ENCODE measurements at regions of chrX and their contacts with region 1.

Region 1: GRCh38 chrX:134764212-134764785 is 106.0 kb upstream of the PLAC1 start:
- DNase-seq: peak; percentile 35
- CTCF ChIP-seq: no peak

Region 2: GRCh38 chrX:134396174-134396573 is 368.1 kb before region 1 on chrX:
- in situ Hi-C with region 1: no loop called
- DNase-seq: no peak
- CTCF ChIP-seq: peak; percentile 60

Region 3: DNA sequence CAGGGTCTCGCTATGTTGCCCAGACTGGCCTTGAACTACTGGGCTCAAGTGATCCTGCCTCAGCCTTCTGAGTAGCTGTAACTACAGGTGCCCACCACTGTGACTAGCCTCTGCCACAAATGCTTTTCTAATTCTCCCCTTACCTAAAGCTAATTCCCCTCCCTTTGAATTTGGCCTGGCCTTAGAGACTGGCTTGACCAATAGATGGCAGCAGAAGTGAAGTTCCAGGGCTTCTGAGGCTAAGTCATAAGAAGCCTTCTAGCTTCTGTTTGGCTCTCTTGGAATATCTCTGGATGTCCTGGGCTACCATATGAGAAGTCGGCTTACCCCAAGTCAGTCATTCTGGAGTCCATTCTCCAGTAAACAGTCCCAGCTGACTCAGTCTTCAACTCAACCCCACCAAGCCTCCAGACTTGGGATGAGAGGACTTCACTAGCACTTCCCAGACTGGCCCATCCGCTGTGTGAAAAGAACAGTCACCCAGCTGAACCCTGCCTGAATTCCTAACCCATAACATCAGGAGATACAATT is 243.4 kb before region 1 on chrX:
- in situ Hi-C with region 1: loop called (anchors 25 kb)
- DNase-seq: peak; percentile 46
- CTCF ChIP-seq: peak; percentile 73

Region 4: GRCh38 chrX:134670134-134670924 is 94.0 kb before region 1 on chrX:
- in situ Hi-C with region 1: no loop called
- DNase-seq: no peak
- CTCF ChIP-seq: no peak

Measured in GM13977 (cell line).